ENCODE measurements at regions of chr5 and their contacts with region 1.

Region 1: GRCh38 chr5:172714491-172715421 is 56.2 kb downstream of the DUSP1 start:
- DNase-seq: peak; percentile 88
- ATAC-seq: peak; percentile 71 to 74

Region 2: DNA sequence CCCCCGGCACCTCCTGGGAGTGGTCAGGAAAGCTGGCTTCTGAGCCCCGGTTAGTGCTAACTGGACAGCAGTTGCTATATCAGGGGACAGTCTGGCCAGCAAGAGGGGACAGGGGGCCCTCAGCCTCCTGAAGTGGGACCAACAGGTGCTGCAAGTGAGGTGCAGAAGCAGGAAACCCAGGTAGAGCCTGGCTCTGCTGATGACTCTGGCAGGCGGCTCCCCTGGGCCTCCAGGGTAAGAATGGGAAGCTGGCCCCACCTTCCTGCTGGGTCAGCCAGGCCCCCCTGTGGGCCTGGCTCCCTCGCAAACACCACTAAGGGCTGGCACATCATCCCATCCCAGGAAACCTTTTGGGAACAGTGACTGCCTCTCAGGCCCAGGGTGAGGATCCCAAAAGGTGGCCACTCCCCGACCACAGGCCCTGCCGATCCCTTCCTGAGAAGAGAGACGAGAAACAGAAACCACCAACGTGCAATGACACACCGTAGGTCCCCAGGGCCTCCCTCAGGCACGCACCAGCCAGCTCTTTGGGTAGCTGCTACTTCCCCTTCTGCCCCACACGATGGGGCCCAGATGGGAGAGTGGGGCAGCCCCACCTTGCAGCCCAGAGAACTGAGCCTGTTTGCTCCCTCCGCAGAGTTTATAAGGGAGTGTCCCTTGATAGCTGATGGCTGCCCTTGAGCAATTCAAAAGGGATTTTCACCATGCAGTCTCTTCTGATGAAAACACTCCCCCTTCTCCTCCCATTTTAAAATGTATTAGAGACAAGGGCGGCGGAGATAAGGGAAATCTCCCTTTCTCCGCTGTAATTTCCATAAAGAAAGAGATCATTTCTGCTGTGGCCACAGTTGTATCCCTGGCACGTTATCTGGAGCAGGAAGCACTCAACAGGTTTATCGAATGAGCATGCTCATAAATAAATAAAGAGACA is 603.6 kb before region 1 on chr5:
- intact Hi-C with region 1: no loop called
- DNase-seq: no peak
- ATAC-seq: peak; percentile 53 to 55

Region 3: GRCh38 chr5:172764849-172765765 is 50.4 kb after region 1 on chr5:
- intact Hi-C with region 1: loop called in 1 of 2 experiments (anchors 5 kb)
- DNase-seq: peak; percentile 96
- ATAC-seq: peak; percentile 63 to 76

Region 4: GRCh38 chr5:172770675-172771438 is 56.1 kb after region 1 on chr5 and contains the start of gene DUSP1:
- intact Hi-C with region 1: loop called (anchors 2 to 5 kb)
- DNase-seq: peak; percentile 100
- ATAC-seq: peak; percentile 72 to 74
- total RNA-seq, gene DUSP1: 126 to 228 TPM

Region 5: GRCh38 chr5:172902497-172903200 is 187.9 kb after region 1 on chr5:
- intact Hi-C with region 1: loop called in 1 of 2 experiments (anchors 10 kb)
- DNase-seq: peak; percentile 82
- ATAC-seq: peak; percentile 52 to 68

Region 6: DNA sequence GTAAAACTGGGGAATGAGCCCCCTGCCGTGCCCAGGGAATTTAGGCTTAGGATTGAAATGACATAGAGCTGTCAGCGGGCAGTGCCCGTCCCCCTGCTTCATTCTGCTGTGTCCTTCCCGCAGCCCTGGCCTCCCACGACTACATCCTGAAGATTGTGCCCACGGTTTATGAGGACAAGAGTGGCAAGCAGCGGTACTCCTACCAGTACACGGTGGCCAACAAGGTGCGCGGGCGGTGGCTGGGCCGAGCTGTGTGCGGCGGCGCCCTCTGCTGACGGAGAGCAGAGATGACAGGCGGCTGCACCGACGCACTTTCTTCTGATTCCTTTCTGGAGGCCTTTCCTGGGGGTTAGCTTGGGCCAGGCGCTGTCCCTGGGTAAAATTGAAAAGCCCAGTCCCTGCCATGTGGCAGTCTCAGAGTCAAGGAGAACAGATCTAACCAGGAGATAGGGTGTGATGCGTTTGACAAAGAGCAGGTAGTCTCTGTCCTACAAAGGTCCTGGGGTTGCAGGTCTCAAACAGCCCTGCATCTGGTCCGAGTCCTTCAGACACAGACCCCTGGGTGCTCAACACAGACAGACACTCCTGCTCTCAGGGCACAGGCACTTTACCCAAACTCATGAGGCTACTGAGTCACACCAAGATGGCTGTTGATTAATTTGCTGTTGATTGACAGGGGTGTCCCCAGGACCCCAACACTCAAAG is 217.7 kb after region 1 on chr5:
- intact Hi-C with region 1: loop called (anchors 1 to 5 kb)
- DNase-seq: peak; percentile 83
- ATAC-seq: peak; percentile 82 to 83

Region 7: DNA sequence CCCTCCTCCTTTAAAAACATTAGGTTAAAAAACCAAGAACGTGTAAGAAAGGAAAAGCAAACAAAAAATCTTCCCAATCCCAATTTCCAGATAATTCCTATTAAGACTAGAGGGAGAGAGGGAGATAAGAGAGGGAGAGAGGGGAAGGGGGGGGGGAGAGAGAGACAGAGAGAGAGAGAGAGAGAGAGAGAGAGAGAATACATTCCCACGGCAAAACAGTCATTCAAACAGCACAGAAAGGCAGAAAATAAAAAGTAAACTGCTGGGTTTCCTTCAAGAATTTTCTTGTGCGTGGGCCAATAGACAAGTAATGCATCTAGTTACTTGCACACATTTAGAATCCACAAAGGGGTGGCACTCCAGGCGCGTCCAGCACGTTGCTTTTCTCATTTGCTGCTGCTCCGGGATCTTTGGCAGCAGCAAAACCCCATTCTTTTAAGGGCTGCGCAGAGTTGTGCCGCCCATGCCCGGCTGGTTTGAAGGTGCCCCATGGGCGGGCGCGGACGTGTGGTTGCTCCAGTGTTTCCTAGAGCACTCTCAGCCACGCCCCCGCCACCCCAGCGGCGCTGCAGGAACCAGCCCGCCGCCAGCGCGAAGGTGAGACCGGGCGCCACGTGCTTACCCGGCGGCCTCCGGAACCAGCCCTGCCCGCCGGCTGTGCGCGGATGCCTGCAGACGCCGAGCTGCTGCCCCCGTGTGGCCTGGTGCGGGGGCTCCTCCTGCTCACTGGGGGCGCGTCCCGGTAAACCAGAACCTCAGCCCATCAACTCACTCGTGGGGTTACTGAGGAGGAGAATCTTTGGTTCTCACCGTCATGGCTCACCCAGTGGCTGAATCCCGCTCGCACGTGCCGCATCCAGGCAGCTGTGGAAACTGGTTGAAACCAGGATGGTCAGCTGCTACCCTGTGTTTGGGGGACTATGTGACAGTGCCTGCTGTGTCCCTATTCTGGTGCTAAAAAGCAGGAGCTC is 568.8 kb after region 1 on chr5:
- intact Hi-C with region 1: loop called in 1 of 2 experiments (anchors 5 kb)
- DNase-seq: peak; percentile 82
- ATAC-seq: peak; percentile 91 to 92